ENCODE measurements at regions of chr11 and their contacts with region 1.

Region 1: DNA sequence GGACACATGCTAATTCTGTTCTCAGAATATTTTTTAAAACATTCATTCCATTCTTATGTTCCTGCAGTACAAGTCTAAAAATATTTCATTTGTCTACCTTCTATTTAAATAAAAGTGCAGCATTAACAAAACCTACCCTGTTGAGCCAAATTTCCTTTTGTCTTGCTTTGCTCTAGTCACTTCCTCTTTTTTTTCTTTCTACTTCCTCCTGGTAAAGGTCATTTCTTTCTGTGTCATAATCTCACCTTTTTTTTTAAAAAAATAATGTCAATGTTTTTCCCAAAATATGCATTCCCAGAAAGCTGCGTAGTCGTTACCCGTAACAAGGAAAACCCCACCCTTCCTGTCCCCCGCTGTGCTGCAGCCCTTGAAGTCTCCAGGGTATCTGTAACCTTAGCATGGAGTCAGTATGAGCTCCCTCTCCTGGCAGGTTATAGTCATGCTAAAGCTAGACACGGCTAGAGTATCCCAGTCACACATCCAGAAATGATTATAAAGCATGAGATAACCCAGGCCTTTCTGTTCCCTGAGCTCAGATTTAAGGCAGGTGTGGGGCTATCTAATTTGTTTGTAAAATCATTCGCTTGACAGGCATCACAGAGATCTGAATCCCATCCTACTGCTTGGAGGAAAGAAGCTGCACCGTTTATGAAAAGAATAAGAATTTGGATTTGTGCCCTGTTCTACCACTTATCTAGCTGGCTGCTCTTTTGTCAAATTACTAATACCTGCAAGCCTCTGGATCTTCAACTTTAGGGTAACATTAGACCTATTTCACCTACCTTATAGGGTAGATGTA is 51.1 kb upstream of the EED start:
- DNase-seq: peak; percentile 92
- H3K4me3 Mint-ChIP-seq: peak overlapping the region; percentile 69
- H3K27ac Mint-ChIP-seq: peak overlapping the region; percentile 57
- H3K4me1 Mint-ChIP-seq: peaks cover 15% of the 10 kb centered on the region
- H3K27me3 Mint-ChIP-seq: no peaks in the 10 kb centered on the region
- CTCF ChIP-seq: peak; percentile 64

Region 2: GRCh38 chr11:86041975-86042378 is 151.5 kb before region 1 on chr11:
- CTCF ChIA-PET with region 1: interaction called, 55 read pairs
- POLR2A ChIA-PET with region 1: interaction called, 4 read pairs
- intact Hi-C with region 1: loop called (anchors 1 kb)
- DNase-seq: peak; percentile 87
- H3K4me3 Mint-ChIP-seq: peak overlapping the region; percentile 2
- H3K27ac Mint-ChIP-seq: peak overlapping the region; percentile 55
- H3K4me1 Mint-ChIP-seq: peaks cover 39% of the 10 kb centered on the region
- H3K27me3 Mint-ChIP-seq: no peaks in the 10 kb centered on the region
- CTCF ChIP-seq: peak; percentile 78

Region 3: GRCh38 chr11:86116386-86116726 is 77.1 kb before region 1 on chr11:
- CTCF ChIA-PET with region 1: interaction called, 12 read pairs
- POLR2A ChIA-PET with region 1: no interaction called
- intact Hi-C with region 1: no loop called
- DNase-seq: peak; percentile 77
- H3K4me3 Mint-ChIP-seq: peak overlapping the region; percentile 55
- H3K27ac Mint-ChIP-seq: peak overlapping the region; percentile 90
- H3K4me1 Mint-ChIP-seq: peaks cover 18% of the 10 kb centered on the region
- H3K27me3 Mint-ChIP-seq: no peaks in the 10 kb centered on the region
- CTCF ChIP-seq: no peak

Region 4: GRCh38 chr11:86182976-86183584 is 10.4 kb before region 1 on chr11:
- CTCF ChIA-PET with region 1: interaction called, 30 read pairs
- POLR2A ChIA-PET with region 1: interaction called, 12 read pairs
- intact Hi-C with region 1: no loop called
- DNase-seq: peak; percentile 65
- H3K4me3 Mint-ChIP-seq: no peak overlapping the region
- H3K27ac Mint-ChIP-seq: no peak overlapping the region
- H3K4me1 Mint-ChIP-seq: no peaks in the 10 kb centered on the region
- H3K27me3 Mint-ChIP-seq: no peaks in the 10 kb centered on the region
- CTCF ChIP-seq: no peak

Region 5: DNA sequence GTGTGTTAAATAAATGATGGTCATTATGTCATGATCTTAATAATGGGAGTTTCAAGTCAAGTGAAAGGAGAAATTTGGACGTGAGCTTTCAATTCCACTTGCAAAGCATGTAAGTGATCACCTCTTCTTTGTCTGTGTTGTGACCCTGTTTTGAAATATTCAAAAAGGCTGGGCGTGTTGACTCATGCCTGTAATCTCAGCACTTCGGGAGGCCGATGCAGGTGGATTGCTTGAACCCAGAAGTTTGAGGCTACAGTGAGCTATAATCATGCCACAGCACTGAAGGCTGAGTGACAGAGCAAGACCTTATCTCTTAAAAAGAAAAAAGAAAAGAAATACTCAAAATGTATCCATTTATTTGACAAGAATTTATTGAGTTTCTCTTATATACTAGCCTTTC is 18.1 kb after region 1 on chr11:
- CTCF ChIA-PET with region 1: interaction called, 32 read pairs
- POLR2A ChIA-PET with region 1: interaction called, 7 read pairs
- intact Hi-C with region 1: no loop called
- DNase-seq: peak; percentile 38
- H3K4me3 Mint-ChIP-seq: no peak overlapping the region
- H3K27ac Mint-ChIP-seq: no peak overlapping the region
- H3K4me1 Mint-ChIP-seq: peaks cover 7% of the 10 kb centered on the region
- H3K27me3 Mint-ChIP-seq: no peaks in the 10 kb centered on the region
- CTCF ChIP-seq: no peak

Region 6: DNA sequence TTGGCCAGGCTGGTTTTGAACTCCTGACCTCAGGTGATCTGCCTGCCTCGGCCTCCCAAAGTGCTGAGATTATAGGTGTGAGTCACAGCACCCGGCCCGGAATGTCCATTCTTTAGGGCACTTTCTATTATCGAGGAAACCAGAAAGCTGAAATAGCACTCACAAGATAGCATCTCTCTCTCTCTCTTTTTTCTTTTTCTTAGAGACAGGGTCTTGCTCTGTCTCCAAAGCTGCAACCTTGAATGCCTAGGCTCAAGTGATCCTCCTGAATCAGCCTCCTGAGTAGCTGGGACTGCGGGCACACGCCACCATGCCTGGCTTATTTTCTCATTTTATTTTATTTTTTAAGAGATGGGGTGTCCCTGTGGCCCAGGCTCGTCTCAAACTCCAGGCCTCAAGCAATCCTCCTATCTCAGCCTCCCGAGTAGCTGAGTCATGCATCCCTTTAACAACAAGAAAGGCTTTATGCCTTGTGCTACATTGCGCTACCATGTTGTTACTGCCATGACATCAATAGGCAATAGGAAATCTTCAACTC is 43.8 kb after region 1 on chr11:
- CTCF ChIA-PET with region 1: no interaction called
- POLR2A ChIA-PET with region 1: no interaction called
- intact Hi-C with region 1: no loop called
- DNase-seq: no peak
- H3K4me3 Mint-ChIP-seq: no peak overlapping the region
- H3K27ac Mint-ChIP-seq: no peak overlapping the region
- H3K4me1 Mint-ChIP-seq: no peaks in the 10 kb centered on the region
- H3K27me3 Mint-ChIP-seq: no peaks in the 10 kb centered on the region
- CTCF ChIP-seq: no peak